Caco-2 (cell line): ENCODE measurements at regions of chr4 and their contacts with region 1.

Region 1: DNA sequence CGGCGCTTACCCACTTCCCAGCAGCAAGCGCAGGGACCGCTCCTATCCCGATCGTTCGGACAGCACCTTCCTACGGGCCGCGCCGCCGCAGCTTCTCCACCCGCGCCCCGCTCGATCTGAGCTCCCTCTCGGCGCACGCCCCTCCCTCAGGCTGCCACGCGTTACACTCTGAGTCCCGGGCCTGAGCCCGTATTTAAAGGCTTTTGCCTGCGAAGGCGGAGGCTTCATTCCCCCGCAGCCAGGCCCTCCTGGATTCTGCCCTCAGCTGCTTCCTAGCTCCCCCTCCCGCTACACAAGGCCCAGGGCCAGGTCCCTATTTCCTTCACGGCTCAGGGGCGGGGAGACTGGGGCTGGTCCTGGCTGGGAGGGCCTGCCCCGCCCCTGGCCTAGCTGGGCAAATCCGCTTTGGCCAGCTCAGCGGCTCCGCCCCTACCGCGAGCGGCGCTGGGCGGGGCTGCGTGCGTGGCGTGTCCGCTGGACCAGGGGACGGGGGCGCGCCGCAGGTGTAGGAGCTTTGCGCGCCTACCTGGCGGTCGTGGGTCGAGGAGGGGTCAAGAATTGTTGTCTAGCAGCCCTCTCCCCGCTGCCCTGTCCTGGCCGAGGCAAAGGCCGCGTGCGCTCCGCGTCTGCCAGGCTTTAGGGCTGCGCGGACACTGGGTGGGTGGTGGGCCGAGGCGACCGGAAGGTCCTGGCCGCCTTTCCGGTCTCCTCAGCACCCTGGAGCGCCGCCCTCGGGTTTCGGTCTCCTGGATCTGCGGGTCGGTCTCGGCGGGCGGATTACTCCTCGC is at the start of gene UGDH:
- DNase-seq: peak; percentile 98 to 99
- H3K4me3 ChIP-seq: peak within 1 kb of the TSS; percentile 76
- H3K4me3 Mint-ChIP-seq: peak within 1 kb of the TSS; percentile 98
- H3K27ac Mint-ChIP-seq: peak within 1 kb of the TSS; percentile 96
- H3K4me1 ChIP-seq: no peaks in the 10 kb centered on the region; the same call in 1 of the 2 replicates
- H3K4me1 Mint-ChIP-seq: no peaks in the 10 kb centered on the region
- H3K27me3 ChIP-seq: no peaks in the 10 kb centered on the region
- H3K27me3 Mint-ChIP-seq: no peaks in the 10 kb centered on the region
- CTCF ChIP-seq: no peak
- total RNA-seq, gene UGDH: 139 and 140 TPM in 2 replicates

Region 2: DNA sequence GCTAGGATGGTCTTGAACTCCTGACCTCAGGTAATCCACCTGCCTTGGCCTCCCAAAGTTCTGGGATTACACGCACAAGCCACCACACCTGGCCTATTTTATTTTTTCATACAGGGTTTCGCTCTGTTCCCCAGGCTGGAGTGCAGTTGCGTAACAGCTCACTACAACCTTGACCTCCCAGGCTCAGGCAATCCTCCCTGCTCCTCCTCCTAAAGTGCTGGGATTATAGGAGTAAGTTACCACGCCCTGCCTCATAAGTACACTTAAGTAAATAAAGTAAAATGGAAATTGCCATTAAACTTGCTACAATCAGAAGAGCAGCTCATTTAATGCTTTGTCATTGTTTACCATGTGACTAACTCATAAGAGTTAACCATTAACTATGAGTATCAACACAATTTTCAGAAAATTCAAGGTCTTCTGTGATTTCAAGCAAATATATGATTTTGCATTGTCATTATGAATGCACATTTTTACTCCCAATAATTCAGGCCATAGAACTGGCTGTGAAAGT is 12.5 kb before region 1 on chr4:
- CTCF ChIA-PET with region 1: no interaction called
- POLR2A ChIA-PET with region 1: interaction called, 12 read pairs
- intact Hi-C with region 1: loop called (anchors 1 kb)
- DNase-seq: peak; percentile 75 to 82
- H3K4me3 ChIP-seq: no peak overlapping the region
- H3K4me3 Mint-ChIP-seq: no peak overlapping the region
- H3K27ac Mint-ChIP-seq: peak overlapping the region; percentile 84
- H3K4me1 ChIP-seq: peaks cover 16% of the 10 kb centered on the region
- H3K4me1 Mint-ChIP-seq: no peaks in the 10 kb centered on the region
- H3K27me3 ChIP-seq: no peaks in the 10 kb centered on the region
- H3K27me3 Mint-ChIP-seq: no peaks in the 10 kb centered on the region
- CTCF ChIP-seq: no peak

Region 3: DNA sequence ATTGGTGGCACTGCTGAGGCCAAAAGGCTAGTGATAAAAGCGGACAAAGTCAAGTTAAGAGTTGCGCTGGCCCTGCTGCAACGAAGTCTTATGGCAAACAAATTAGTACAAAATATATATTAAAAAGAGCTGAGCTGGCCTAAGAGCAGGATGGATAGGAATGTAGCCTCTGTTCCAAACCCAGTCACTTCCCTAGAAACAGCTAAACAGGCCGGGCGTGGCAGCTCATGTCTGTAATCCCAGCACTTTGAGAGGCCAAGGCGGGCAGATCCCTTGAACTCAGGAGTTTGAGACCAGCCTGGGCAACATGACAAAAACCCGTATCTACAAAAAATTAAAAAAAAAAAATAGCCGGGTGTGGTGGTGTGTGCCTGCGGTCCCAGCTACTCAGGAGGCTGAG is 32.2 kb after region 1 on chr4:
- CTCF ChIA-PET with region 1: interaction called, 10 read pairs
- POLR2A ChIA-PET with region 1: interaction called, 48 read pairs
- intact Hi-C with region 1: loop called (anchors 1 kb)
- DNase-seq: peak in 1 of 2 experiments; percentile 39
- H3K4me3 ChIP-seq: no peak overlapping the region
- H3K4me3 Mint-ChIP-seq: no peak overlapping the region
- H3K27ac Mint-ChIP-seq: peak overlapping the region; percentile 75
- H3K4me1 ChIP-seq: peaks cover 38% of the 10 kb centered on the region
- H3K4me1 Mint-ChIP-seq: peaks cover 32% of the 10 kb centered on the region
- H3K27me3 ChIP-seq: no peaks in the 10 kb centered on the region
- H3K27me3 Mint-ChIP-seq: no peaks in the 10 kb centered on the region
- CTCF ChIP-seq: no peak

Region 4: GRCh38 chr4:39591290-39591689 is 63.8 kb after region 1 on chr4:
- CTCF ChIA-PET with region 1: no interaction called
- POLR2A ChIA-PET with region 1: no interaction called
- intact Hi-C with region 1: loop called (anchors 5 kb)
- DNase-seq: no peak
- H3K4me3 ChIP-seq: no peak overlapping the region
- H3K4me3 Mint-ChIP-seq: no peak overlapping the region
- H3K27ac Mint-ChIP-seq: no peak overlapping the region
- H3K4me1 ChIP-seq: no peaks in the 10 kb centered on the region
- H3K4me1 Mint-ChIP-seq: no peaks in the 10 kb centered on the region
- H3K27me3 ChIP-seq: no peaks in the 10 kb centered on the region
- H3K27me3 Mint-ChIP-seq: no peaks in the 10 kb centered on the region
- CTCF ChIP-seq: no peak

Region 5: GRCh38 chr4:39638354-39639240 is 111.1 kb after region 1 on chr4 and contains the start of gene SMIM14:
- CTCF ChIA-PET with region 1: interaction called, 4 read pairs
- POLR2A ChIA-PET with region 1: interaction called, 33 read pairs
- intact Hi-C with region 1: loop called (anchors 1 kb)
- DNase-seq: peak; percentile 98 to 99
- H3K4me3 ChIP-seq: peak within 1 kb of the TSS; percentile 94
- H3K4me3 Mint-ChIP-seq: peak within 1 kb of the TSS; percentile 85
- H3K27ac Mint-ChIP-seq: peak within 1 kb of the TSS; percentile 74
- H3K4me1 ChIP-seq: peaks cover 28% of the 10 kb centered on the region
- H3K4me1 Mint-ChIP-seq: peaks cover 15% of the 10 kb centered on the region
- H3K27me3 ChIP-seq: no peaks in the 10 kb centered on the region
- H3K27me3 Mint-ChIP-seq: no peaks in the 10 kb centered on the region
- CTCF ChIP-seq: no peak
- total RNA-seq, gene SMIM14: 37.6 and 41.0 TPM in 2 replicates